GM12878 (cell line): ENCODE measurements at regions of chr11 and their contacts with region 1.

Region 1: GRCh38 chr11:129992161-129992944 is 10.3 kb downstream of the PRDM10 start:
- DNase-seq: no peak
- ATAC-seq: peak; percentile 71
- H3K4me3 ChIP-seq: no peak overlapping the region
- H3K27ac ChIP-seq: no peak overlapping the region
- H3K4me1 ChIP-seq: no peaks in the 10 kb centered on the region
- H3K27me3 ChIP-seq: no peaks in the 10 kb centered on the region
- CTCF ChIP-seq: peak; percentile 41 to 44 (median 42); a peak in 5 of 6 replicates
- EP300 ChIP-seq: no peak
- POLR2A ChIP-seq: no peak
- RAD21 ChIP-seq: peak; percentile 48

Region 2: GRCh38 chr11:129973068-129973467 is 19.3 kb before region 1 on chr11:
- CTCF ChIA-PET with region 1: interaction called, 11 read pairs
- POLR2A ChIA-PET with region 1: no interaction called
- RAD21 ChIA-PET with region 1: no interaction called
- SMC1A ChIA-PET with region 1: interaction called, 5 read pairs
- in situ Hi-C with region 1: no loop called
- intact Hi-C with region 1: no loop called
- DNase-seq: no peak
- ATAC-seq: peak; percentile 73
- H3K4me3 ChIP-seq: no peak overlapping the region
- H3K27ac ChIP-seq: no peak overlapping the region; the same call in 1 of the 2 replicates
- H3K4me1 ChIP-seq: peaks cover 6% of the 10 kb centered on the region; the same call in 1 of the 2 replicates
- H3K27me3 ChIP-seq: no peaks in the 10 kb centered on the region
- CTCF ChIP-seq: no peak
- EP300 ChIP-seq: no peak
- POLR2A ChIP-seq: no peak
- RAD21 ChIP-seq: no peak